HepG2 (cell line): ENCODE measurements at regions of chr14 and their contacts with region 1.

Region 1: DNA sequence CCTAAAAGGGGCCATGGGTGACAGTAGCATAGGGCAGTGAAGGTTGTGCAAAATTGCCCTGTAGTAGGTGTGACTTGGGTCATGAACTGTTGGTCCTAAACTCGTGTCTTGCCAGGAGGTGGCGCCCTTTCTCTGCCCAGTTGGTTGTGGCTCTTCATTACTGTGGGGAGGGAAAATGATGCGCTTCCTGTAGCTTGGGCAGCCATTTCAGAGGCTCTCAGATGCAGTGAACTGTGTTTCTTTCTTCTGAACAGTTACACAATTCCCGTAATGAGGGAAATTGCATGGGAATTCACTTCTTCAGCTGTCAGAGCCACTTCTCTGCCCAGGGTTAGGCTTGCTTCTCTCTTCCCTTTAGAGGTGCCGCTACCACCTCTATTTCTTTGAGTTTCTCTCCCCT is 148.1 kb upstream of the NRXN3 start:
- DNase-seq: peak; percentile 54
- ATAC-seq: peak; percentile 98
- H3K4me3 ChIP-seq: no peak overlapping the region
- H3K27ac ChIP-seq: no peak overlapping the region
- H3K4me1 ChIP-seq: no peaks in the 10 kb centered on the region
- H3K27me3 ChIP-seq: no peaks in the 10 kb centered on the region
- CTCF ChIP-seq: peak; percentile 78
- EP300 ChIP-seq: no peak
- POLR2A ChIP-seq: no peak
- RAD21 ChIP-seq: peak; percentile 57

Region 2: DNA sequence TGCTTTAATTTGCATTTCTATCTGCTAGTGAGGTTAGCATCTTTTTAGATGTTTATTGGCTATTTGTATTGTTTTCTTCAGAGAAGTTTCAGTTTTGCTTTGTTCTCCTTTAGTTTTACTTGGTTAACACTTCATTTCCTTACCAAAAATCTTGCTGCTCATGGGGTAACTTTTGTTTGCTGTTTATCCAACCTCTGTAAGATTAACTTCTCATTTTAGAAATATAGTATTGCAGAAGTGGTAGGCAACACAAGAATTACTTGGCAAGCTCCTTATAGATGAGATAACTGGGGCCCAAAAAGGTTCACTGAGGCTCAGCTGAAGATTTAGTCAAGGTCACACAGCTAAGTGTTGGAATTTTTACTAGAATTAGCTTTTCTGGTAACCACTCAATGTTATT is 354.7 kb before region 1 on chr14:
- CTCF ChIA-PET with region 1: no interaction called
- POLR2A ChIA-PET with region 1: no interaction called
- in situ Hi-C with region 1: no loop called
- intact Hi-C with region 1: no loop called
- DNase-seq: no peak
- ATAC-seq: no peak
- H3K4me3 ChIP-seq: no peak overlapping the region
- H3K27ac ChIP-seq: no peak overlapping the region
- H3K4me1 ChIP-seq: peaks cover 7% of the 10 kb centered on the region
- H3K27me3 ChIP-seq: no peaks in the 10 kb centered on the region
- CTCF ChIP-seq: no peak
- EP300 ChIP-seq: no peak
- POLR2A ChIP-seq: no peak
- RAD21 ChIP-seq: no peak

Region 3: DNA sequence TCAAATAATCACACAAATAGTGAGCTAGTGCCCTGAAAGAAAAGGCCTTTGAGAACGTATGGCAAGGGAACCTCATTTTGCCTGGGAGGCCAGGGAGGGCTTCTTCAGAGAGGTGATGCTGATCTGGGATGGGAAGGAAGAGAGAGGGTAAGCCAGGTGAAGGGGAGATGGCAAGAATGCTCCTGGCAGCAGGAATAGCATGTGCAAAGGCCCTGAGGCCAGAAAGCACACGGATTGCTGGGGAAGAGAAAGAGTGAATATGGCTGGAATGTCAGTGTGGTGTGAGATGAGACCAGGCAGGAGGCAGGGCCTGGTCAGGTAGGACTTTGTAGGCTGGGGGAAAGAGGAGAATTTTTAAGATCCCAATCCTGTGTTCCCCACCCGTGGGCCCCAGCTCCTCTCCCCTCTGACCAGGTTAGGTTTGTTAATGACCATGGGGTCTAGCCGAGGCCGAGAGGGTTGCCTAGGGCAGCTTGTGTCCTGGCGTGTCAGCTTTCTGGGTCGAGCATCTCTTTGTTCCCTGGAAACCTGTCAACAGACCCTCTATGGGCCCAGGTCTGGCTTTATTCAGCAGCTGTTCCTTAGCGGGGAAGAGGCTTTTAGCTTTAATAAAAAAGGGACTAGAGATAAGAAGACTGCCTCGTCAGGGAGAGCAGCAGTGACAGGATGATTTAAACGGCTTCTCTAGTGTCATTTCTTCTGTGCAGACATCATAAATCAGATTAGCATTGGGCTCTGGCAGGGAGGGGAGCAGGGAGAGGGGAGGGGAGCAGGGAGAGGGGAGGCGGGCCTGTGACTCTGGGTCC is 98.7 kb before region 1 on chr14:
- CTCF ChIA-PET with region 1: no interaction called
- POLR2A ChIA-PET with region 1: no interaction called
- in situ Hi-C with region 1: no loop called
- intact Hi-C with region 1: no loop called
- DNase-seq: no peak
- ATAC-seq: no peak
- H3K4me3 ChIP-seq: no peak overlapping the region
- H3K27ac ChIP-seq: no peak overlapping the region
- H3K4me1 ChIP-seq: peaks cover 10% of the 10 kb centered on the region; the same call in 1 of the 2 replicates
- H3K27me3 ChIP-seq: no peaks in the 10 kb centered on the region
- CTCF ChIP-seq: no peak
- EP300 ChIP-seq: no peak
- POLR2A ChIP-seq: no peak
- RAD21 ChIP-seq: no peak

Region 4: DNA sequence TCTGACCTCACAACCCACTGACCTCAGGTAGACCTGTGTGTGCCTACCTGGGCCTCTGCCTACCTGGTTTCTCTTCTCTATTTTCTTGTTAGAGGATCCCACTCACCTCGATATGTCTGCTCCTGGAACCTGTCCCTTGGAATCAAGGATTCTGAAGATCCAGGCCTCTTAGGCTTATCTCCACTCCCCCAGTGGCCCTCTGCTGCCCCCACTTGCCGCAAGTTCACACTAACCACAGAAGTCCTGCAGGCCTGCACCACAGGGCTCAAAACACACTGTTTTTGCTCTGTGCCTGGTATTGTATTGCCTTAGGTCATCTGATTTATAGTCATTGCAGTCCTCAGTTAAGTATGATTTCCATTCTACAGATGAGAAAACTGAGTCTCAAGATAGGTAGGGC is 132.8 kb after region 1 on chr14:
- CTCF ChIA-PET with region 1: no interaction called
- POLR2A ChIA-PET with region 1: no interaction called
- in situ Hi-C with region 1: no loop called
- intact Hi-C with region 1: loop called (anchors 2 kb)
- DNase-seq: no peak
- ATAC-seq: peak; percentile 69
- H3K4me3 ChIP-seq: no peak overlapping the region
- H3K27ac ChIP-seq: no peak overlapping the region
- H3K4me1 ChIP-seq: no peaks in the 10 kb centered on the region
- H3K27me3 ChIP-seq: no peaks in the 10 kb centered on the region
- CTCF ChIP-seq: peak; percentile 48
- EP300 ChIP-seq: no peak
- POLR2A ChIP-seq: no peak
- RAD21 ChIP-seq: no peak

Region 5: DNA sequence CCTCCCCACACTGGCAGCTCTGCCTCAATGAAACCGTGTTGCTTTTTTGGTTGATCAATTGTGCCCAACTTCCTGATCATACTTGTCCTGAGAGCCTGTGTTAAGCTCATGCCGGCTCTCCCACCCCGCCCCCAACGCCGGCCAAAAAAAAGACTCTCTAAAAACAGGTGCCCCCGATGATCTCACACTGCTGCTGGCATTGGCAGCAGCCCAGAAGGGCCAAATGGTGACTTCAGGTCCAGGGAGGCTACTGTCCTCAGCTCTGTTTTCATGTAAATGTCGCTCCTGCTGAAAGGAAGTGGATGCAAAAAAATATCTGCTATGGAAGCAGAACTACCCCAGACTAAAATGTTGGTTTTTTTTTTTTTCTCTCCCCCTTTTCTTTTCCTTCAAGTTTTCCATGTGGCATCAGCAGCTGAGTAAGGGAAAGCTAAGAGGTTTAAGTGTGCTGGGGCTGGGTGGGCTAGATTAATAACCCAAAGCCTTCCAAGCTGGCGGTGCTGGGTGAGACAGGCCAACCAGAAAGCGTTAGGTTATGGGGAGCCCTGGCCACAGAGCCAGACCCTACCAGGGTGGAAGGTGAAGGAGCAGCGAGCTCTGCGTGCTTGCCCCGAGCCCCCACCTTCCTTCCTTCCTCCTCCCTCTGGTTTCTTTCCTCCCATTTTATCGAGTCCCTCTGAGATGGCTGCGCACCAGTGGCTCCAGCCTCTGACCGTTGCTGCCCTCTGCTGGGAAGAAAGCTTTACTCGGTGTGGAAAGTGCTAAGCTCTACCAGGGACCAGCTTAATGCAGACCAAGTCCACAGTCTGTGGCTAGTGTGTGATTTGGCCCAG is 544.2 kb after region 1 on chr14:
- CTCF ChIA-PET with region 1: interaction called, 10 read pairs
- POLR2A ChIA-PET with region 1: no interaction called
- in situ Hi-C with region 1: no loop called
- intact Hi-C with region 1: no loop called
- DNase-seq: peak; percentile 34
- ATAC-seq: peak; percentile 99
- H3K4me3 ChIP-seq: no peak overlapping the region
- H3K27ac ChIP-seq: no peak overlapping the region
- H3K4me1 ChIP-seq: no peaks in the 10 kb centered on the region
- H3K27me3 ChIP-seq: no peaks in the 10 kb centered on the region
- CTCF ChIP-seq: peak; percentile 83
- EP300 ChIP-seq: no peak
- POLR2A ChIP-seq: no peak
- RAD21 ChIP-seq: peak; percentile 60

Region 6: DNA sequence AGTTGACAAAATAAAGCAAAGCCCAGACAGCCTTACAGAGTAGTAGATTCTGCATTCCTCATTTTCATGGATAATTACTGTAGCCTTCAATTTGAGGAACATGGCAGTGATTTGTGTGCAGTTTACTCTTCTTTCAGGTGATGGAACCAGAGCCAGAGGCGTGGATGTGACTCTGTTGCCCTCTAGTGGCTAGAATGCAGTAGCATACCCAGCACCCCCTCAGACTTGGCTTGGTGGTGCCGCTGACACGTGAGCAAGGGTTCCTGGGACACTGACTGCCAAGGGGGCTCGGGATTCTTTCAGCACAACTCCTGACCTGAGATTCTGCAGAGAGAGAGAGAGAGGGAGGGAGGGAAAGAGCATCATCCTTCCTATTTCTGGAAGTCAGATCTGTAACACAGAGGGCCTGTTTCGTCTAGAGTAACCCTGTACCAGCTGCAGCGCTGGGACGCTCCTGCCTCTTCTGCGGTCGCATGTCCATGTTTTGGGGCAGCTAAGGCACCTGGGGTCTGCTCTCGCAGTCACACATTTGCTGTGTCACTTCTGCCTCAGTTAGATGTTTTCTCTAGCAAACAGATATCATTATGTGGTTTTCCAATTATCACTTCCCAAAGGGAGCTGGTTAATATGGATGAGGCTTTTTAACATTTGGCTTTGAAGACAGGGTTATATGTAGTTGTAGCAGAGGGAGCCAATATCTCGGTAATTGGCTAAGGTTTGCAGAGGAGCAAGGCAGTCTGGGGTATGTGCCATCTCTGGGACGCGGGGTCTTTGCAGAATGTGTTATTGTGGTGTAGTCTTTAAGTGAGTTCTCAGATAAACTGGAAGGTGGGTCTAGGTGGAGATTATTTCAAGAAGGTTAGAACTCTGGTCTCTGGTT is 576.2 kb after region 1 on chr14:
- CTCF ChIA-PET with region 1: no interaction called
- POLR2A ChIA-PET with region 1: no interaction called
- in situ Hi-C with region 1: loop called (anchors 10 kb)
- intact Hi-C with region 1: loop called (anchors 10 kb)
- DNase-seq: peak; percentile 44
- ATAC-seq: peak; percentile 99
- H3K4me3 ChIP-seq: no peak overlapping the region
- H3K27ac ChIP-seq: no peak overlapping the region
- H3K4me1 ChIP-seq: no peaks in the 10 kb centered on the region
- H3K27me3 ChIP-seq: no peaks in the 10 kb centered on the region
- CTCF ChIP-seq: peak; percentile 87
- EP300 ChIP-seq: no peak
- POLR2A ChIP-seq: no peak
- RAD21 ChIP-seq: 0 out of 2 replicates have a peak, but pooled peaks have one; percentile 24

Region 7: GRCh38 chr14:78848234-78848820 is 826.3 kb after region 1 on chr14:
- CTCF ChIA-PET with region 1: no interaction called
- POLR2A ChIA-PET with region 1: no interaction called
- in situ Hi-C with region 1: loop called (anchors 25 kb)
- intact Hi-C with region 1: no loop called
- DNase-seq: peak; percentile 29
- ATAC-seq: peak; percentile 91
- H3K4me3 ChIP-seq: no peak overlapping the region
- H3K27ac ChIP-seq: no peak overlapping the region
- H3K4me1 ChIP-seq: no peaks in the 10 kb centered on the region
- H3K27me3 ChIP-seq: no peaks in the 10 kb centered on the region
- CTCF ChIP-seq: peak; percentile 79
- EP300 ChIP-seq: no peak
- POLR2A ChIP-seq: no peak
- RAD21 ChIP-seq: no peak